ENCODE measurements at regions of chr13 and their contacts with region 1.

Region 1: GRCh38 chr13:21176220-21176982 is at the starts of genes MRPL57 and SKA3:
- DNase-seq: peak; percentile 95 to 97
- H3K4me3 ChIP-seq: peak within 1 kb of the TSS; percentile 63 to 89 (median 82)
- H3K27ac ChIP-seq: peak within 1 kb of the TSS; percentile 95
- H3K4me1 ChIP-seq: peaks cover 0 to 4% (median 0%) of the 10 kb centered on the region in 4 experiments; a peak in 2 of 7 replicates
- H3K27me3 ChIP-seq: no peaks in the 10 kb centered on the region
- CTCF ChIP-seq: no peak
- EP300 ChIP-seq: no peak
- POLR2A ChIP-seq: peak; percentile 99 to 100
- RAD21 ChIP-seq: no peak; a peak in 1 of 4 replicates
- total RNA-seq, gene MRPL57: 34.1 and 34.5 TPM in 2 replicates
- total RNA-seq, gene SKA3: 60.1 and 63.7 TPM in 2 replicates

Region 2: DNA sequence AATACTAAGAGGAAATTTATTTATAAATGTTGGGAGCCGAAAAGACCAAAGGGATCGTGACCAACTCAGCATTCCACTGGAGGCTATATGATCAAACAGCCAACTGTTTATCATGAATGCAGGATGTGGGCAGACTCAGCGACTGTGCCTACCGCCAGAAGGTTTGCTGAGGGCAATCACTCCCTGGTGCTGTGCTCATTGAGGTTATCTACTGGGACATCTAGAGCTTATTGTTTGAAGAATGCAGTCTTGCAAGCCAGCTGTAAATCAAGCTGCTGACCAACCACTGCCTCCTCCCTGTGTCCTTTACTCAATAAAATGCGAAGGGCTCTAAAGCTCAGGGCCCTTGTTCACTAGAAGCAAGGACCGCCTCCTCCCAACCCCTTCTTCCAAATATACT is 265.4 kb before region 1 on chr13:
- CTCF ChIA-PET with region 1: no interaction called
- POLR2A ChIA-PET with region 1: no interaction called
- DNase-seq: no peak
- H3K4me3 ChIP-seq: no peak overlapping the region
- H3K27ac ChIP-seq: no peak overlapping the region
- H3K4me1 ChIP-seq: no peaks in the 10 kb centered on the region
- H3K27me3 ChIP-seq: no peaks in the 10 kb centered on the region
- CTCF ChIP-seq: no peak
- EP300 ChIP-seq: no peak
- POLR2A ChIP-seq: no peak
- RAD21 ChIP-seq: no peak

Region 3: GRCh38 chr13:20942938-20943559 is 233.4 kb before region 1 on chr13:
- CTCF ChIA-PET with region 1: interaction called, 15 read pairs
- POLR2A ChIA-PET with region 1: interaction called, 9 read pairs
- DNase-seq: no peak
- H3K4me3 ChIP-seq: no peak overlapping the region
- H3K27ac ChIP-seq: no peak overlapping the region
- H3K4me1 ChIP-seq: peaks cover 0 to 3% (median under 1%) of the 10 kb centered on the region in 4 experiments; a peak in 2 of 7 replicates
- H3K27me3 ChIP-seq: peaks cover 0 to 19% (median 10%) of the 10 kb centered on the region in 4 experiments; a peak in 6 of 7 replicates
- CTCF ChIP-seq: no peak
- EP300 ChIP-seq: no peak
- POLR2A ChIP-seq: no peak
- RAD21 ChIP-seq: no peak

Region 4: DNA sequence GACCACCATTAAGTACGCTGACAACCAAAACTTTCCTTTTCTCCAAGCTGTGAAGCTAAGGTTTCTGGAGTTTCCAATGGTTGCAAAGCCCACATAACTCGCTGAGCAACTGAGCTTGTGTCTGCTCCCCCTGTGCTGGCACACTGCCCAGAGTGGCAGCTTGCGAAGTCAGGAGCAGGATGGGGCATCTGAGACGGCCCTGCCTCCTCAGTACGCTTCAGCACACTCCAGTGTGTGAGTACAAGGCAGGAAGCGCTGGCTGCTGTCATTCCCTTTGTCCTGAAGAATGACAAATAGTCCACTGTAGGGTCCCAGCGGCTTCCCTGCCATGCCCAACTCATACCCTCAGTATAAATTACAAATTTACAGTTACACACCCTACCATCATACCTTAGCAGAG is 51.5 kb before region 1 on chr13:
- CTCF ChIA-PET with region 1: interaction called, 3 read pairs
- POLR2A ChIA-PET with region 1: interaction called, 12 read pairs
- DNase-seq: no peak
- H3K4me3 ChIP-seq: no peak overlapping the region
- H3K27ac ChIP-seq: no peak overlapping the region
- H3K4me1 ChIP-seq: peaks cover 0 to 11% (median 5%) of the 10 kb centered on the region in 4 experiments; a peak in 6 of 7 replicates
- H3K27me3 ChIP-seq: no peaks in the 10 kb centered on the region
- CTCF ChIP-seq: no peak
- EP300 ChIP-seq: no peak
- POLR2A ChIP-seq: no peak
- RAD21 ChIP-seq: no peak

Region 5: DNA sequence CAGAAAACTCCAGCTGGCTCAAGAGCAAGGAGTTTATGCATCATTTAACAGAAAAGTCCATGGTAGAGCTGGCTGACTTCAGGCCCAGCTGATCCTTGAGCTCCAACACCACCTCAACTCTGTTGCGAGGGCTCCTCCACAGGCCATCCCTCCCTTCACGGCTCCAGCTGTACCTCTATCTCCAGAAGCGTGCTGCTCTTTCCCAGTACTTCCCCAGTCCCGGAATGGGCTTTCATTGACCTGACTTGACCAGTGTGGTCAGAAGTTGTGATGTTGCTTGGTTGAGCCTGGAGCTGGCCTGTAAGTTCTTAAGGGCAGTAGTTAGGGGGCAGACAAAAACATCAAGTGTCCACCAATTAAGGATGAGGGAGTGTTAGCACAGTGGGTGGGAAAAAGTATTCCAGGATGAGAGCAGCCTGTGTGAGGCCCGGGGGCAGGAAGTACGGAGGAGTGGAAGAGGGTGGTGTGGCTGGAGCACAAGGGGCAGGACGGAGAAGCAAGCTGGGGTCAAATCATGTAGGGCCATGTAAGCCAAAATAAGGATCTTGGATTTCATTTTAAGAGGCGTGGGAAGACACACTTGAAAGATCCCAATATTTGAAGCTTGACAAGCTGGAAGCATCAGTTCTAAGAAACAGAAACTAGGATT is 24.0 kb before region 1 on chr13:
- CTCF ChIA-PET with region 1: interaction called, 3 read pairs
- POLR2A ChIA-PET with region 1: interaction called, 15 read pairs
- DNase-seq: no peak
- H3K4me3 ChIP-seq: no peak overlapping the region
- H3K27ac ChIP-seq: no peak overlapping the region
- H3K4me1 ChIP-seq: peaks cover 0 to 2% (median 0%) of the 10 kb centered on the region in 4 experiments; a peak in 4 of 7 replicates
- H3K27me3 ChIP-seq: no peaks in the 10 kb centered on the region
- CTCF ChIP-seq: peak; percentile 11 to 29 (median 17); a peak in 3 of 4 replicates
- EP300 ChIP-seq: no peak
- POLR2A ChIP-seq: no peak
- RAD21 ChIP-seq: peak; percentile 24 to 46; a peak in 2 of 4 replicates

Region 6: GRCh38 chr13:21164631-21165030 is 11.8 kb before region 1 on chr13:
- CTCF ChIA-PET with region 1: interaction called, 3 read pairs
- POLR2A ChIA-PET with region 1: interaction called, 23 read pairs
- DNase-seq: no peak
- H3K4me3 ChIP-seq: no peak overlapping the region
- H3K27ac ChIP-seq: no peak overlapping the region
- H3K4me1 ChIP-seq: no peaks in the 10 kb centered on the region
- H3K27me3 ChIP-seq: no peaks in the 10 kb centered on the region
- CTCF ChIP-seq: no peak
- EP300 ChIP-seq: no peak
- POLR2A ChIP-seq: no peak
- RAD21 ChIP-seq: no peak